Left cardiac atrium (tissue), 4 donors: ENCODE measurements at regions of chr7 and their contacts with region 1.

Region 1: GRCh38 chr7:92228100-92228499 is 17.6 kb downstream of the KRIT1 start:
- DNase-seq: no peak
- ATAC-seq: no peak

Region 2: GRCh38 chr7:92095380-92095779 is 132.7 kb before region 1 on chr7:
- intact Hi-C with region 1: loop called in 1 of 2 experiments (anchors 10 kb)
- DNase-seq: no peak
- ATAC-seq: peak in 1 of 2 donors; percentile 53